ENCODE measurements at regions of chr19 and their contacts with region 1.

Region 1: DNA sequence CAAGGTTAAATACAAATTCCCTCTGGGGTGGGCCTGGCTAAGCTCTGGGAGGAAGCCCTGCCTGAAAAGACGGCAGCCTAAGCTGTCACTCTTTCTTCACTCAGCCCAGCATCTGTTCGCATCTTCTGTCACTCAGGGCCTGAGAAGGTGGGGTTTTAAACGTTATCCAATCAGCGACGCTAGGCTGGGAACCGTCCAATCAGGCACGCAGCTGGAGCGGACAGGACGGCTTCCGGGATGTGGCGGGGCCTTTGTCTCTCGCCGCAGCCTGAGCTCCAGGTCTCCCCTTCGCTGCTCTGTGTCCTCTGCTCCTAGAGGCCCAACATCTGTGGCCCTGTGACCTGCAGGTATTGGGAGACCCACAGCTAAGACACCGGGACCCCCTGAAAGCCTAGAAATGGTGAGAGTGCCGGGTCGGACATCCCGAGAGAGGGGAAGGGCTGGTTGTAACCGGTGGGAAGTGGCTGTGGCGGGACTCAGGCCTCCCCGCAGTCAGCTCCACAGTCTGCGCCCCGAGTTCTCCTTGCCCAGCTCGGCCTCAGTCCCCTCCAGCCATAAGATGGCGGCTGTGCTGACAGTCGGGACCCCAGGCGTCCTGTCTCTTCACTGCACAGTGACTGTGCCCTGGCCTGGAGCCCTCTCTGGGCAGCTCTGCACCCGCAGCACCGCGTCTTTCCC is at the start of gene ZNF431:
- DNase-seq: peak; percentile 95
- H3K4me3 ChIP-seq: peak within 1 kb of the TSS; percentile 60 to 87 (median 64)
- H3K27ac ChIP-seq: peak within 1 kb of the TSS; percentile 58
- H3K4me1 ChIP-seq: peaks cover 5% of the 10 kb centered on the region
- H3K27me3 ChIP-seq: no peaks in the 10 kb centered on the region
- CTCF ChIP-seq: no peak
- POLR2A ChIP-seq: peak; percentile 79
- total RNA-seq, gene ZNF431: 10.7 and 12.0 TPM in 2 replicates

Region 2: DNA sequence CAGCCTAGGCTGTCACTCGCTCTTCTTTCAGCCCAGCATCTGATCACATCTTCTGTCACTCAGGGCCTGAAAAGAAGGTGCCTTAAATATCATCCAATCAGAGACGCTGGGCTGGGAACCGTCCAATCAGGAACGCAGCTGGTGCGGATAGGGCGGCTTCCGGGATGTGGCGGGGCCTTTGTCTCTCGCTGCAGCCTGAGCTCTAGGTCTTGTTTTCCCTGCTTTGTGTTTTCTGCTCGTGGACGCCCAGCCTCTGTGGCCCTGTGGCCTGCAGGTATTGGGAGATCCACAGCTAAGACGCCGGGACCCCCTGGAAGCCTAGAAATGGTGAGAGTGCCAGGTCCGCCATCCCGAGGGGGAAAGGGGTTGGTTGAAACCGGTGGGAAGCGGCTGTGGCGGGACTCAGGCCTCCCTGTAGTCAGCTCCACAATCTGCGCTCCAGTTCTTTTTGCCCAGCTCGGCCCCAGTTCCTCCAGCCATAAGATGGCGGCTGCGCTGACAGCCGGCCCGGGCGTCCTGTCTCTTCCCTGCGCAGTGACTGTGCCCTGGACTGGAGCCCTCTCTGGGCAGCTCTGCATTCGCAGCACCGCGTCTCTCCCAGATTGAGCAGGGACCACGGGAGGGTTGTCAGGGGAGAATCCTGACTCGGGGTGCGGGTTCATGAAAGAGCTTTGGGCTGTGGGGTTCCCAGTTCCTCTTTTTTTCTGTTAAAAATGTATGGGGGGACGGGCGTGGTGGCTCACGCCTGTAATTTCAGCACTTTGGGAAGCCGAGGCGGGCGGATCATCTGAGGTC is 218.7 kb before region 1 on chr19 and contains the start of gene ZNF85:
- CTCF ChIA-PET with region 1: no interaction called
- POLR2A ChIA-PET with region 1: no interaction called
- dilution Hi-C with region 1: no loop called
- intact Hi-C with region 1: loop called (anchors 1 kb)
- DNase-seq: peak; percentile 94
- H3K4me3 ChIP-seq: peak within 1 kb of the TSS; percentile 66 to 86 (median 78)
- H3K27ac ChIP-seq: peak within 1 kb of the TSS; percentile 74
- H3K4me1 ChIP-seq: no peaks in the 10 kb centered on the region
- H3K27me3 ChIP-seq: no peaks in the 10 kb centered on the region
- CTCF ChIP-seq: no peak
- POLR2A ChIP-seq: peak; percentile 70
- total RNA-seq, gene ZNF85: 9.2 and 9.5 TPM in 2 replicates

Region 3: DNA sequence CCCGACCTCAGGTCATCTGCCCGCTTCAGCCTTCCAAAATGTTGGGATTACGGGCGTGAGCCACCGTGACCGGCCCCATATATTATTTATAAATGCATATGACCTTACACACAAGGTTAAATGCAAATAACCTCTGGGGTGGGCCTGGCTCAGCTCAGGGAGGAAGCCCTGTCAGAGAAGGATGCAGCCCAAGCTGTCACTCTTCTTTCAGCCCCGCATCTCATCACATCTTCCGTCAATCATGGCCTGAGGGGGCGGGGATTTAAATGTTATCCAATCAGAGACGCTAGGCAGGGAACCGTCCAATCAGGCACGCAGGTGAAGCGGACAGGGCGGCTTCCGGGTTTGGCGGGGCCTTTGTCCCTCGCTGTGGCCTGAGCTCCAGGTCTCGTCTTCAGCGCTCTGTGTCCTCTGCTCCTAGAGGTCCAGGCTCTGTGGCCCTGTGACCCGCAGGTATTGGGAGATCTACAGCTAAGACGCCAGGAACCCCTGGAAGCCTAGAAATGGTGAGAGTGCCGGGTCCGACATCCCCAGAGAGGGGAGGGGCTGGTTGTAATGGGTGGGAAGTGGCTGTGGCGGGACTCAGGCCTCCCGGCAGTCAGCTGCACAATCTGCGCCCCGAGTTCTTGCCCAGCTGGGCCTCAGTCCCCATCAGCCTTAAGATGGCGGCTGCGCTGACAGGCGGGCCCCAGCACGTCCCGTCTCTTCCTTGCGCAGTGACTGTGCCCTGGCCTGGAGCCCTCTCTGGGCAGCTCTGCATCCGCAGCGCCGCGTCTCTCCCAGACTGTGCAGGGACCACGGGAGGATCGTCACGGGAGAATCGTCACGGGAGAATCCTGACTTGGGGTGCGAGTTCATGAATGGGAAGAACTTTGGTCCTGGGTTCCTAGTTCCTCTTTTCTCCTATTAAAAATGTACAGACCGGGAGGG is 121.4 kb before region 1 on chr19 and contains the start of gene ZNF430:
- CTCF ChIA-PET with region 1: no interaction called
- POLR2A ChIA-PET with region 1: no interaction called
- dilution Hi-C with region 1: no loop called
- intact Hi-C with region 1: loop called (anchors 2 kb)
- DNase-seq: peak; percentile 93
- H3K4me3 ChIP-seq: peak within 1 kb of the TSS; percentile 86 to 89 (median 87)
- H3K27ac ChIP-seq: peak within 1 kb of the TSS; percentile 75
- H3K4me1 ChIP-seq: peaks cover 3% of the 10 kb centered on the region
- H3K27me3 ChIP-seq: no peaks in the 10 kb centered on the region
- CTCF ChIP-seq: no peak
- POLR2A ChIP-seq: peak; percentile 48
- total RNA-seq, gene ZNF430: 11.1 and 13.4 TPM in 2 replicates

Region 4: DNA sequence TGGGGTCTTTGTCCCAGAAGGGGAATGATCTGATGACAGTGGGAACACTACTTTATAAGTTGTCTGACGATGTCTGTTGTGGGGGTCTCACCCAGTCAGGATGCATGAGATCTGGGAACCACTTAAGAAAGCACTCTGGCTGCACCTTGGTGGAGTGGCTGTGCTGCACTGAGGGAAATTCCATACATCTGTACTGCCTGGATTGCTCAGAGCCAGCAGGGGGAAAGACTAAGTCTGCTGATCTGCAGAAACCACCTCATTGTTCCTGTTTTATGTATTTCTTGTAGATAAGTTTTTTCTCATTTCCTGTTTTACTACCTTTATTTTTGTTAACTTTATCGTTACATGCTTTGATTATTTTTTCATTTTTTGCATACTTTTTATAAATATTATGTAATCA is 94.2 kb before region 1 on chr19:
- CTCF ChIA-PET with region 1: no interaction called
- POLR2A ChIA-PET with region 1: no interaction called
- dilution Hi-C with region 1: no loop called
- intact Hi-C with region 1: no loop called
- DNase-seq: no peak
- H3K4me3 ChIP-seq: no peak overlapping the region
- H3K27ac ChIP-seq: no peak overlapping the region
- H3K4me1 ChIP-seq: no peaks in the 10 kb centered on the region
- H3K27me3 ChIP-seq: no peaks in the 10 kb centered on the region
- CTCF ChIP-seq: no peak
- POLR2A ChIP-seq: no peak

Region 5: DNA sequence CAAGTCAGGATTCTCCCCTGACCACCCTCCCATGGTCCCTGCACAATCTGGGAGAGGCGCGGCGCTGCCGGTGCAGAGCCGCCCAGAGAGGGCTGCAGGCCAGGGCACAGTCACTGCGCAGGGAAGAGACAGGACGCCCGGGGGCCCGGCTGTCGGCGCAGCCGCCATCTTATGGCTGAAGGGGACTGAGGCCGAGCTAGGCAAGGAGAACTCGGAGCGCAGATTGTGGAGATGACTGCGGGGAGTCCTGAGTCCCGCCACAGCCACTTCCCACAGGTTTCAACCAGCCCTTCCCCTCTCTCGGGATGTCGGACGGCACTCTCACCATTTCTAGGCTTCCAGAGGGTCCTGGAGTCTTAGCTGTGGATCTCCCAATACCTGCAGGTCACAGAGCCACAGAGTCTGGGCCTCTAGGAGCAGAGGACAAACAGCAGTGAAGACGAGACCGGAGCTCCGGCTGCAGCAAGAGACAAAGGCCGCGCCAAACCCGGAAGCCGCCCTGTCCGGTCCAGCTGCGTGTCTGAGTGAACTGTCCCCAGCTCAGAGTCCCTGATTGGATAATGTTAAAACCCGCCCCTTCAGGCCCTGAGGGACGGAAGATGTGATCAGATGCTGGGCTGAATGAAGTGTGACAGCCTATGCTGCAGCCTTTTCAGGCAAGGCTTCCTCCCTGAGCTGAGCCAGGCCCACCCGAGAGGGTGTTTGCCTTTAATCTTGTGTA is 187.1 kb after region 1 on chr19 and contains the start of gene ZNF708:
- CTCF ChIA-PET with region 1: no interaction called
- POLR2A ChIA-PET with region 1: no interaction called
- dilution Hi-C with region 1: no loop called
- intact Hi-C with region 1: loop called (anchors 10 kb)
- DNase-seq: peak; percentile 90
- H3K4me3 ChIP-seq: peak within 1 kb of the TSS; percentile 58 to 95 (median 93)
- H3K27ac ChIP-seq: peak within 1 kb of the TSS; percentile 96
- H3K4me1 ChIP-seq: peaks cover 6% of the 10 kb centered on the region
- H3K27me3 ChIP-seq: no peaks in the 10 kb centered on the region
- CTCF ChIP-seq: no peak
- POLR2A ChIP-seq: peak; percentile 89
- total RNA-seq, gene ZNF708: 8.1 and 10.4 TPM in 2 replicates

Region 6: DNA sequence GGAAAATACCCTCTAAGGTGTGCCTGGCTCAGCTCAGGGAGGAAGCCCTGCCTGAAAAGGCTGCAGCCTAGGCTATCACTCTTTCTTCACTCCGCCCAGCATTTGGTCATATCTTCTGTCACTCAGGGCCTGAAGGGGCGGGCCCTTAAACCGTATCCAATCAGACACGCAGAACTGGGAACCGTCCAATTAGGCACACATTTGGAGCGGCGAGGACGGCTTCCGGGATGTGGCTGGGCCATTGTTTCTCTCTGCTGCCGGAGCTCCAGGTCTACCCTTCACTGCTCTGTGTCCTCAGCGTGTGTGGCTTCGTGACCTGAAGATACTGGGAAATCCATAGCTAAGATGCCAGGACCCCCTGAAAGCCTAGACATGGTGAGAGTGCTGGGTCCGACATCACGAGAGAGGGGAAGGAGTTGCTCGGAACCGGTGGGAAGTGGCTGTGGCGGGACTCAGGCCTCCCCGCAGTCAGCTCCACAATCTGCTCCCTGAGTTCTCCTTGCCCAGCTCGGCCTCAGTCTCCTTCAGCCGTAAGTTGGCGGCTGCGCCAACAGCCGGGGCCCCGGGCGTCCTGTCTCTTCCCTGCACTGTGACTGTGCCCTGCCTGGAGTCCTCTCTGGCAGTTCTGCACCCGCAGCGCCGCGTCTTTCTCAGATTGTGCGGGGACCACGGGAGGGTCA is 255.1 kb after region 1 on chr19 and contains the start of gene ZNF493:
- CTCF ChIA-PET with region 1: no interaction called
- POLR2A ChIA-PET with region 1: no interaction called
- dilution Hi-C with region 1: no loop called
- intact Hi-C with region 1: loop called (anchors 5 kb)
- DNase-seq: peak; percentile 92
- H3K4me3 ChIP-seq: peak within 1 kb of the TSS; percentile 31 to 75 (median 59)
- H3K27ac ChIP-seq: no peak within 1 kb of the TSS
- H3K4me1 ChIP-seq: peaks cover 2% of the 10 kb centered on the region
- H3K27me3 ChIP-seq: no peaks in the 10 kb centered on the region
- CTCF ChIP-seq: no peak
- POLR2A ChIP-seq: peak; percentile 65
- total RNA-seq, gene ZNF493: 8.0 and 9.5 TPM in 2 replicates